ENCODE measurements at regions of chr17 and their contacts with region 1.

Region 1: DNA sequence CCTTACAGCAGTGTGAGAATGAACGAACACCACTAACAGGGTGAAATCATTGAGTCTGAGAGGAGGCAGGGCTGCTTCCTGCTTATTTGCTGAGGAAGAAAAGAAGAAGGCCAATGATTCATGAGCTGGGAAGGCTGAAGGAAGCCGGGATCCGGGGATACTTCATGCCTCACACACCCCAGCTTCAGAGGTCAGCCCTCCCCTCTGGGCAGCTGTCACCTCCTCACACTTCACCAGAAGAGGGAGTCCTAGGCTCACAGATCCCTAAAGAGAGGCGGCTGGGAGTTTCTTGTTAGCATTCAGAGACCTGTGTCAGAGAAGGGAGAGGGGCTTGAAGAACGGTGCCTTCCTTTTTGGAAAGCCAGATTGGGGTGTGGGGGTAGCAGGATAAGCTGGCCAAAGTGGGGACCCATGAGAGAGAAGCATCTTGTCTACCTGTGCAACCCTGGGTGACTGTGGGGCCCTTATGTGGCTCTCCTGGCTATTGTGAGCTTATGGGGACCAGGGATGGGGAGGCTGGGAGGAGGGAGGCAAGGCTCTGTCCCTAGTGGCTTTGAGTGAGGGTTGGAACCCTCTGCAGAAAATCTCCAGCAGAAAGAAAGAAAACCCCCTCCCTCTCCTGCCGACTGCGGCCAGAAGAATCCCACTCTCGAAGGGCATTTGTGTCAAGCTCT is 94.6 kb downstream of the RGS9 start:
- DNase-seq: peak; percentile 73
- ATAC-seq: peak; percentile 40
- H3K4me3 Mint-ChIP-seq: no peak overlapping the region
- H3K27ac Mint-ChIP-seq: no peak overlapping the region
- H3K4me1 Mint-ChIP-seq: peaks cover 48% of the 10 kb centered on the region
- H3K27me3 Mint-ChIP-seq: peaks cover 20% of the 10 kb centered on the region

Region 2: GRCh38 chr17:65219124-65219523 is 12.7 kb before region 1 on chr17:
- CTCF ChIA-PET with region 1: interaction called, 13 read pairs
- DNase-seq: no peak
- ATAC-seq: no peak
- H3K4me3 Mint-ChIP-seq: no peak overlapping the region
- H3K27ac Mint-ChIP-seq: no peak overlapping the region
- H3K4me1 Mint-ChIP-seq: peaks cover 3% of the 10 kb centered on the region
- H3K27me3 Mint-ChIP-seq: peaks cover 33% of the 10 kb centered on the region

Region 3: GRCh38 chr17:65294179-65294720 is 62.5 kb after region 1 on chr17:
- CTCF ChIA-PET with region 1: interaction called, 16 read pairs
- DNase-seq: peak; percentile 70
- ATAC-seq: peak; percentile 87
- H3K4me3 Mint-ChIP-seq: no peak overlapping the region
- H3K27ac Mint-ChIP-seq: no peak overlapping the region
- H3K4me1 Mint-ChIP-seq: no peaks in the 10 kb centered on the region
- H3K27me3 Mint-ChIP-seq: peaks cover 25% of the 10 kb centered on the region

Region 4: DNA sequence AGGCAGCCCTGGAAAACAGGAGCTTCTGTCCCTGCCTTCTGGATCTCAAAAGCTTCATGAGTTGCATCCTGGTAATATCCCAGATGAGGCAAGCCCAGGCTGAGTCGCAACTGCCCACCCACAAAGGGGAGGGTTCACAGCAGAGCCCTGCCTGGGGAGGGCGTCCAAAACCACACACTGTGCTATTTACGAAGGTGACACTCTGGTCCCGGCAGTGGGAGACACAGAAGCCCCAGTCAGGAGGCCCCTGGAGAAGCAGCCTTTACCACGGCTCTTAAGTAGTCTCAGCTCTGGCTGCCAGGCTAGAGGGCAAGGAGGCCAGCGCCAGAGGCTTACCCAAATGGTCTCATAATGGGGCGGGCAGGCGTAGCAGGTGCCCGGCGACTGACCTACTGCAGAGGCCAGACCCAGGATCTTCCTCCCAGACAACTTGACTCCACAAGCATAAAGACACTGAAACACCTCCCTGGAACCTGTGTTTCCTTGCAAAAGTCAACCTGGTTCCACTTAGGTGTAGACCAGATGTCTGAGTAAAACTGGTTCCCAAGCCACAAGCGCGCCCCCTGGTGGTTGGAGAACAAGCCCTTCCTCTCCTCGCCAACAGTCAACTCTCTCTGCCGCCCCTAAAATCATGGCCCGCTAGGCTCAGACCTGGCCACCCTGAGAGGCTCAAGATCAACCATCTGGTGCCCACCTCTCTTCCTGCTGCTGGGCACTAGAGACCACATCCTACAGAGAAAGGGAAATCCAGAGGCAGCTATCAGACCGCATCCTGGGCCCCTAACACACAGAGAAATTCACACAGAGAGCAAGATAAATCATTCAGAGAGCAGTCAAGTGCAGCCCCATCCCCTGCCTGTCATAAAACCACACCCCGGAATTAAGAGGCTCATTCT is 324.5 kb after region 1 on chr17:
- CTCF ChIA-PET with region 1: interaction called, 40 read pairs
- DNase-seq: peak; percentile 90
- ATAC-seq: peak; percentile 59
- H3K4me3 Mint-ChIP-seq: no peak overlapping the region
- H3K27ac Mint-ChIP-seq: no peak overlapping the region
- H3K4me1 Mint-ChIP-seq: peaks cover 19% of the 10 kb centered on the region
- H3K27me3 Mint-ChIP-seq: peaks cover 14% of the 10 kb centered on the region

Region 5: GRCh38 chr17:66165513-66166123 is 933.8 kb after region 1 on chr17:
- CTCF ChIA-PET with region 1: interaction called, 28 read pairs
- DNase-seq: no peak
- ATAC-seq: no peak
- H3K4me3 Mint-ChIP-seq: no peak overlapping the region
- H3K27ac Mint-ChIP-seq: no peak overlapping the region
- H3K4me1 Mint-ChIP-seq: peaks cover 7% of the 10 kb centered on the region
- H3K27me3 Mint-ChIP-seq: no peaks in the 10 kb centered on the region

Measured in activated CD8-positive, alpha-beta memory T cell treated with anti-CD3 and anti-CD28 coated beads, Interleukin-2, amount 10 ng/mL, durations not matched to agents 7 days and 5 days (primary cell).